Stomach (tissue), 19 donors: ENCODE measurements at regions of chr22 and their contacts with region 1.

Region 1: GRCh38 chr22:16922076-16922475 is 85.9 kb downstream of the GAB4 start:
- DNase-seq: no peak
- H3K4me3 ChIP-seq: no peak overlapping the region
- H3K27ac ChIP-seq: no peak overlapping the region
- H3K4me1 ChIP-seq: no peaks in the 10 kb centered on the region
- H3K27me3 ChIP-seq: peaks cover 0 to 35% (median 4%) of the 10 kb centered on the region in 3 donors
- CTCF ChIP-seq: no peak
- EP300 ChIP-seq: no peak
- POLR2A ChIP-seq: no peak

Region 2: DNA sequence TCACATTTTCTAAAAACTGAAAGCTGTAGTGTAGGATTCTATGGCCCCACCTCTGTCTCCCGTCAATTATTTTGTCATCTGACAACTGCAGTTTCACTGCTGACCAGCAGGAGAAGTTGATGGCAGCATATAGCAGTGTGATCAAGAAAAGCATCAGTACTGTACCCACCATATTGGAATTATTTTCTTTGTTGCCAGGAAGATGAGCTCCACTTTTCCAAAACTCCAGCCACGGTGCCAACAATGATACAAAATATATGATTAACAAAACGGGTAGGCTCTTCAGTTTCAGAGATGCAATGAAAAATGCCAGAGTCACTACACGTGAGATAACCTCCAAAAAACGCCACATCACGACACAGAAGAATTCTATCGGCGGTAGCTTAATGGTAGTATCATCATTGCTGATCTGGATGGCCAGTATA is 138.1 kb before region 1 on chr22:
- intact Hi-C with region 1: no loop called
- DNase-seq: no peak
- H3K4me3 ChIP-seq: no peak overlapping the region
- H3K27ac ChIP-seq: no peak overlapping the region
- H3K4me1 ChIP-seq: no peaks in the 10 kb centered on the region
- H3K27me3 ChIP-seq: no peaks in the 10 kb centered on the region
- CTCF ChIP-seq: peak in 1 of 7 experiments; percentile 8
- EP300 ChIP-seq: no peak
- POLR2A ChIP-seq: no peak

Region 3: GRCh38 chr22:17057959-17058814 is 136.1 kb after region 1 on chr22:
- intact Hi-C with region 1: loop called (anchors 10 kb)
- DNase-seq: peak; percentile 75 to 88
- H3K4me3 ChIP-seq: no peak overlapping the region
- H3K27ac ChIP-seq: no peak overlapping the region
- H3K4me1 ChIP-seq: peaks cover 0 to 11% (median 6%) of the 10 kb centered on the region in 4 donors
- H3K27me3 ChIP-seq: peaks cover 0 to 6% (median 0%) of the 10 kb centered on the region in 3 donors
- CTCF ChIP-seq: peak in 5 of 7 experiments; percentile 80 to 89 (median 87)
- EP300 ChIP-seq: no peak
- POLR2A ChIP-seq: no peak